ENCODE measurements at regions of chr2 and their contacts with region 1.

Region 1: GRCh38 chr2:88669371-88670214 is 21.9 kb upstream of the RPIA start:
- DNase-seq: peak; percentile 65
- ATAC-seq: peak; percentile 63
- H3K4me3 Mint-ChIP-seq: no peak overlapping the region
- H3K27ac Mint-ChIP-seq: no peak overlapping the region
- H3K4me1 Mint-ChIP-seq: peaks cover 6% of the 10 kb centered on the region
- H3K27me3 Mint-ChIP-seq: peaks cover 5% of the 10 kb centered on the region

Region 2: DNA sequence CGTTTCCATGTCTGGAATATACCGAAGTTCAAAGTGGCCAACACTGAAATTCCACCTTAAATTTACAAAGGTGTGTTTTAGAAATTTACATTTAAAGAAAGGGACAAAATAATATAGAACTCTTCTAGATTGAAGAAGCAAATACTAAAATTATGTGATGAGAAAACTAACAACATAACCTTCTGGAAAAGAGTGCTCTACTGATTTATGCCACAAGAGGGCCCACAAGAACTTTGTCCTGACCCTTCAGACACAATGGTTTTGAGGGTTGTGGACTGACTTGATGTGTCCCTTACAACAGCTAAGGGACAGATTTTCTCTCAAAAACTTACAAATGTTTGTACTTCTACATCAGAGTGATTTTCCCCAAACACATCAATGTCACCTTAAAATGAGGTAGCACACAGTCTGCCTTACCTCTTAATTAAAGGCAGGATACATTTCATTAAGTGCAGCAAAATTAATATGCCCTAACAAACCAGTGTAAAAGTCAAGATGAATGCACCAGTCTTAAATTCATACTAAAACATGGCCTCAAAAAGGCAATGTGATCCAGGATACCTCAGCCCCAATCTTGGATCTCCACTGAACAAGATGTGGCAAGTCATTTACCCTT is 78.5 kb before region 1 on chr2:
- CTCF ChIA-PET with region 1: interaction called, 66 read pairs
- DNase-seq: peak; percentile 60
- ATAC-seq: peak; percentile 73
- H3K4me3 Mint-ChIP-seq: no peak overlapping the region
- H3K27ac Mint-ChIP-seq: peak overlapping the region; percentile 52
- H3K4me1 Mint-ChIP-seq: peaks cover 4% of the 10 kb centered on the region
- H3K27me3 Mint-ChIP-seq: no peaks in the 10 kb centered on the region

Region 3: DNA sequence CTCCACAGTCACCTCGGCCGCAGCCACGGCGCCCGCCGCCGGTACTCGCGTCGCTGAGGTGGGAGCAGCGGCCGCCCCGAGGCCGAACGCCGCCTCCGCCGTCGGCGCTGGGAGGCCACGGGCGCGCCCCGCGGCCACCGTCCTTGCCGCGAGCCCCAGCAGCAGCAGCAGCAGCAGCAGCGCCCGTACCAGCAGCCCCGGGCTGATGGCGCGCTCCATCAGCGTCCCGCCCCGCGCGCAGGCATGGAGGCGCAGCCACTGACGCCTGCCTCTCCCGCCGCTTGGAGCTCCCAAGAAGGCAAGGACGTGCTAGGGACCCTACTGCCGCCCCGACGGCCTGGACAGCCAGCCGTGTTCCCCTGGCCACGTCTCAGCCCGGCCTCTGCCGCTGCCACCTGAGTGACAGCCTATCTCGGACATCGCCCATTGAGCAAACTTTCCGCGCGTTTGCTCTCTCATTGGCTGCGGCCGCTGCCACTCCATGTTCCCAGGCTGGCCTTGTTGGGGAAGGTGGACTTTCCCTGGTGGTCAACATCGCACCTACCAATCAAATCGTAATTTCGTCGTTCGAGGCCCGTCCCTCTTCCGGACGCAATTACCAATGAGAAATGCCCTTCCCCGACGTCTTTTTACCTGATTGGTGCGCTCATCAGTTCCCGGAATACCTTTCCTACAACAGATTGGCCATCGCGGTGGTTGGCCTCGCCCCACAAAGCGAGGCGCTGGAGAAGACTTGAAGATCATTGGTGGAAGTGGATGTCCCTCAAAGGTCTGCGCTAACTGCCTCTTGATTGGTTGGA is 42.3 kb before region 1 on chr2 and contains the start of gene EIF2AK3:
- CTCF ChIA-PET with region 1: interaction called, 12 read pairs
- DNase-seq: peak; percentile 98
- ATAC-seq: peak; percentile 89
- H3K4me3 Mint-ChIP-seq: no peak within 1 kb of the TSS
- H3K27ac Mint-ChIP-seq: peak within 1 kb of the TSS; percentile 94
- H3K4me1 Mint-ChIP-seq: peaks cover 22% of the 10 kb centered on the region
- H3K27me3 Mint-ChIP-seq: no peaks in the 10 kb centered on the region
- total RNA-seq, gene EIF2AK3: 17.0 to 29.8 TPM

Region 4: DNA sequence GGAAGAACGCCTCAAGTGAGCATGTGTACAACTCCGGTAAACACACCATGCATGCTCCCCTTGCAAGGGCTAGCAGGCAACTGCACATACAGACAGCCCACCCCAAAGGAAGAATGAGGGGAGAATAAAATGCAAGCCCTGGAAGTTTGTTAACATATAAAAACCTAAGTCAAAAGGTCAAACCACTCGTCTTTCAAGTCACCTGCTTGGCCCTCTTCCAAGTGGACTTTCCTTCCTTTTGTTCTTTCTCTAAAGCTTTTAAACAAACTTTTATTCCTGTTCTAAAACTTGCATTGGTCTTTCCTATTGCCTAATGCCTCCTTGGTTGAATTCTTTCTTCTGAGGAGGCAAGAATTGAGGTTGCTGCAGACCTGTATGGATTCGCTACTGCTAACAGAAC is 16.7 kb after region 1 on chr2:
- CTCF ChIA-PET with region 1: interaction called, 27 read pairs
- DNase-seq: no peak
- ATAC-seq: no peak
- H3K4me3 Mint-ChIP-seq: no peak overlapping the region
- H3K27ac Mint-ChIP-seq: no peak overlapping the region
- H3K4me1 Mint-ChIP-seq: peaks cover 18% of the 10 kb centered on the region
- H3K27me3 Mint-ChIP-seq: no peaks in the 10 kb centered on the region

Region 5: DNA sequence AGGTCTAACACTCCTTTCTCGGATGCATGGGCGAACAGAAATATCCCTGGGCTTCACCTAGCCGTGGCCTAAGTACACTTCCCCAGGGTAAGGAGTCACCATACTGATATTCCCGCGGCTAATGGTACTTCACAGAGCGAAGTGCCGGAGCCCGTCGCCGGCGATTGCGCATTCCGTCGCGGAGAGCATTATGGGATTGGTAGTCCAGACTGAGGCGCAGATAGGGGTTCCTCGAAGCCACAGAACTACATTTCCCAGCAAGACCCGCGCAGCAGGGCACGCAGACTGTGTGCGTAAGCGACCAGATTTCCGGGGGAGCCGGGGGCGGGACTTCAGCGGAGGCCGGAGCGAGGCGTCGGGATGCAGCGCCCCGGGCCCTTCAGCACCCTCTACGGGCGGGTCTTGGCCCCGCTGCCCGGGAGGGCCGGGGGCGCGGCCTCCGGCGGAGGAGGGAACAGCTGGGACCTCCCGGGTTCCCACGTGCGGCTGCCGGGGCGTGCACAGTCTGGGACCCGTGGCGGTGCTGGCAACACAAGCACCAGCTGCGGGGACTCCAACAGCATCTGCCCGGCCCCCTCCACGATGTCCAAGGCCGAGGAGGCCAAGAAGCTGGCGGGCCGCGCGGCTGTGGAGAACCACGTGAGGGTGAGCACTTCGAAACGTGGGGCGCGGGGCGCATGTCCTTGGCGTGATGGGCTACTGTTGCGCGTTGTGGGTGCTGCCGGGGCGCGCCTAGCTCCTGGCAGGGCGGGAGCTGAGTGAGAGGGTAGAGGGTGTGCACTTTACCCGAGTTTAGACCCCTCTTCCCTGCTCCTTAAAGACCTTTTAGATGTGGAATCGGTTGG is 22.0 kb after region 1 on chr2 and contains the start of gene RPIA:
- CTCF ChIA-PET with region 1: interaction called, 27 read pairs
- DNase-seq: peak; percentile 100
- ATAC-seq: peak; percentile 93
- H3K4me3 Mint-ChIP-seq: peak within 1 kb of the TSS; percentile 96
- H3K27ac Mint-ChIP-seq: peak within 1 kb of the TSS; percentile 91
- H3K4me1 Mint-ChIP-seq: peaks cover 38% of the 10 kb centered on the region
- H3K27me3 Mint-ChIP-seq: no peaks in the 10 kb centered on the region
- total RNA-seq, gene RPIA: 42.1 to 54.4 TPM

Measured in activated CD8-positive, alpha-beta memory T cell treated with anti-CD3 and anti-CD28 coated beads, Interleukin-2, amount 10 ng/mL, durations not matched to agents 7 days and 5 days (primary cell).